ENCODE measurements at regions of chr9 and their contacts with region 1.

Region 1: DNA sequence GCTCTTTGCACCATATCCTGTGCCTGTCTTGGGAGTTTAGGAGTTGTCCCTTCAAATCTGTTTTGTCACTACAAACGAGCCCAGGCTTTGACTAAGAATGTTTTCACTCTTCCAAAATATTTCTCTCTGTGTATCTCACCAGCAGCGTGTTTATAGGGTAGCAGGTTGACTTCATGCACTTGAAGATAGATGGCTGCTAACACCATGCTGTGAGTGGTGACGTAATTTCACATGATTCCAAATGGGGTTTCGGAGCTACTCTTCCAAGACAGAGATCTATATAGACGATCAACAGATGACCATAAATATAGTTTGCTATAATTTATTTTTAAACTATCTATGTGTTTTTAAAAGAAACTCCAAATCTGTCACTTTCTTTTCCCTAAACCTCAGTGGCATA is 30.6 kb downstream of the RORB start:
- DNase-seq: no peak
- ATAC-seq: no peak
- H3K4me3 Mint-ChIP-seq: no peak overlapping the region
- H3K27ac Mint-ChIP-seq: no peak overlapping the region
- H3K4me1 Mint-ChIP-seq: no peaks in the 10 kb centered on the region
- H3K27me3 Mint-ChIP-seq: peaks cover 8% of the 10 kb centered on the region
- CTCF ChIP-seq: no peak

Region 2: GRCh38 chr9:74066128-74066527 is 461.6 kb before region 1 on chr9:
- CTCF ChIA-PET with region 1: no interaction called
- POLR2A ChIA-PET with region 1: no interaction called
- intact Hi-C with region 1: no loop called
- DNase-seq: no peak
- ATAC-seq: no peak
- H3K4me3 Mint-ChIP-seq: no peak overlapping the region
- H3K27ac Mint-ChIP-seq: no peak overlapping the region
- H3K4me1 Mint-ChIP-seq: no peaks in the 10 kb centered on the region
- H3K27me3 Mint-ChIP-seq: no peaks in the 10 kb centered on the region
- CTCF ChIP-seq: no peak

Region 3: GRCh38 chr9:74543145-74543544 is 15.4 kb after region 1 on chr9:
- CTCF ChIA-PET with region 1: no interaction called
- POLR2A ChIA-PET with region 1: no interaction called
- intact Hi-C with region 1: loop called (anchors 1 kb)
- DNase-seq: no peak
- ATAC-seq: no peak
- H3K4me3 Mint-ChIP-seq: no peak overlapping the region
- H3K27ac Mint-ChIP-seq: no peak overlapping the region
- H3K4me1 Mint-ChIP-seq: no peaks in the 10 kb centered on the region
- H3K27me3 Mint-ChIP-seq: no peaks in the 10 kb centered on the region
- CTCF ChIP-seq: no peak

Measured in activated B cell treated with CpG ODN at 0.5 μM for 24 hours (primary cell).